ENCODE measurements at regions of chr12 and their contacts with region 1.

Region 1: GRCh38 chr12:67943226-67943892 is 45.9 kb upstream of the IFNG-AS1 start:
- DNase-seq: no peak
- ATAC-seq: peak; percentile 84

Region 2: DNA sequence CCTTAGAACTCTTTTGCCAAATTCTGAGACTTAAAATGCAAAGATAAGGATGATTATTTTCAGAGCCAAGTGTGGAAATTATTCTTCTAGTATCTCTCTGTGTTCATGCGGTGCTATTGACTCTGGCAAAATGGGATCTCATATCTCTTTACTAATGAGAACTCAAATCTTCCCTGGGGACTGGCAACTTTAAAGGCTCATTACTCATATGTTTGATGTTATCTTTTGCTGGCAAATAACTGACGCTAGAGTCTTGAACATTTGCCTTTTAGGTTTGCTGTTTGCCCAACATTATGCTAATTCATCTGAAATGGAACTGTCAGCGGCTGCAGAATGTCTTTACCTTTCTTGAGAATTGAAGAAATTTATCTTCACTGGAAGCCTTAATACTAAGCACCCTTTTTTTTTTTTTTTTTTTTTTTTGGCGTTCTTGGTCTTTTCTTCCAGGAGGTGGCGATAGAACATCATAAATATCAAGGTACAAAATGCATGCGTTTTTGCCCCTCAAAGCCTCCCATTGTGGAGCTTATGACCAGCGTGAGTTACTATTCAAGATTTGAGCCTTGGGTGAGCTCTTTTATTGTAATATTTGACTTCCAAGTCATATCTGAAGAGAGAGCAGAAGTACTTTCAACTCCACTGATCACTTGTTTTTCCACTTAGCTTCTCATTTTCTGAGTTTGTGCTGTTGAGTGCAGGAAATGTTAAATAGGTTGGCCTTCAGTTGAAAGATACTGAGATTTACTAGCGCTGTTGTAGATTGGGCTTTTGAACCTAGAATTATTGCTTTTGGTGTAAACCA is 587.6 kb before region 1 on chr12:
- intact Hi-C with region 1: loop called (anchors 10 kb)
- DNase-seq: no peak
- ATAC-seq: peak; percentile 65

Region 3: DNA sequence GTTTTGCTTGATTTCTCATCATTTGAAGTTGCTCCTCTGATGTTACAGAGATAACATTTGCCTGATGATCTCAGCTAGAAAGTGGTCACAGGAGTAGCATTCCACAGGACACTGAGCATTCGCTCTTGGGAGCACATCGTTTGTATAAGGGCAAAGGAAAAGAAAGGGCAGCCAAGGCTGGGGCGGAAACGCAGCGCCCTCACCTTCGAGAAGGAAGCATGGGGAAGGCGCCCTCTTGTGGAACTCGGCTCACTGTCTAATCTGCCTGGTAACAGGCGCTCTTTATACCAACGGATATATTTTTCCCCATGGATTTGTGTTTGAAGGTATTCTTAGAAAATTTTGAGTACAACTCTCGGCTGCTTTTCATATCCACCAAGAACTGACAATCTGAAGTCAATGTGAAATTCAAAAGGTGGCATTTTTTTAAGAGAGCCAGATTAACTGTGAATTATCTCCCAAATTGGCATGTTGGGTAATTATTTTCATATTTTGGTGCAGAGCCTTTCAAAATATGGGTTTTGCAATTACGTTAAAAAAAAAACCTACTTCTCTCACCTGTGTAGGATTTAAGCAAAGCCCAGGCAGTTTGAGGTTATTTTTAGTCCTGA is 501.5 kb before region 1 on chr12:
- intact Hi-C with region 1: loop called (anchors 5 kb)
- DNase-seq: peak; percentile 91
- ATAC-seq: peak; percentile 98

Region 4: GRCh38 chr12:67649570-67650387 is 293.6 kb before region 1 on chr12:
- intact Hi-C with region 1: loop called (anchors 10 kb)
- DNase-seq: peak; percentile 68
- ATAC-seq: peak; percentile 63

Region 5: DNA sequence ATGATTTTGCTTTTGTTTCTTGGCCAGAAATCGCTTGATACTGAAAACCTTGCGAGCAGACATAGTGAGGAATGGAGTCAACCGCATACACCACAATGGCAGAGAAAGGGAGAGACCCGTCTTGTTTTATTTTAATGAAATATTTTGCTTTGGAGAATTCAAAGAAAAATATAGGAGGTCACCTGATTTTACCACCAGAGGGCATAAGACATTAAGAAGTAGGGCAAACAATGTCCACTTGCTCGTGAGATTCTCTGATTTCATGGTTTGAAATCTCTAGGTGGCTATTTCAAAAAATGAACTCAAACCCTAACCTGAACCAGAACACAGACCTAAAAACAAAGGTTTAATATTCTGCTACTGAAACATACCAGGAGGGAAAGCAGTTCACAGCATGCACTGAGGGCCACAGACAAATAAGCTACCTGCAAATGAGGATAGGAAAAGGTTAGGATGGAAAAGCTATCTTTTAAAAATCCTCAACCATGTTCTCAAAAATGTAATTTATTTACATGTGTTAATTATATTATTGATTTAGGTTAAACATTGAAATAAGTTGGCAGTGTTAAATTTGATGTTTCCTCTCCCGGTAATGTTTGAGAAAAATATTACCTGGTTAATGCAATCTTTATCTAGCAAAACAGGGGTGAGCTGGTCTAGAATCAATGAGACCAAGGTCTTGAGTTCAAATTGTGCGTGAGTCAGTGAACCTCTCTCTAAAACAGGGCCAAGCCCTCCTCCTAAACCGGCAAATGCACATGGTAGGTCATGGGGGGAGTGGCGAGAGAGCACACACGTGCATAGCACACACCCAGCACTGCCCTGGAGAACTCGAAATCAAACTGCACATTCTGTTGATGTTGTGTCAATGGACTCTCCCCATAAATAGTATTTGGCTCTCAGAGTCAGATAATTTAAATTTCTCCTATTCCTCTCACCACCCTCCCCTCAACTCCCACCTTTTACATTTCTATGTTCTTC is 58.4 kb after region 1 on chr12:
- intact Hi-C with region 1: no loop called
- DNase-seq: no peak
- ATAC-seq: no peak